ENCODE measurements at regions of chr7 and their contacts with region 1.

Region 1: DNA sequence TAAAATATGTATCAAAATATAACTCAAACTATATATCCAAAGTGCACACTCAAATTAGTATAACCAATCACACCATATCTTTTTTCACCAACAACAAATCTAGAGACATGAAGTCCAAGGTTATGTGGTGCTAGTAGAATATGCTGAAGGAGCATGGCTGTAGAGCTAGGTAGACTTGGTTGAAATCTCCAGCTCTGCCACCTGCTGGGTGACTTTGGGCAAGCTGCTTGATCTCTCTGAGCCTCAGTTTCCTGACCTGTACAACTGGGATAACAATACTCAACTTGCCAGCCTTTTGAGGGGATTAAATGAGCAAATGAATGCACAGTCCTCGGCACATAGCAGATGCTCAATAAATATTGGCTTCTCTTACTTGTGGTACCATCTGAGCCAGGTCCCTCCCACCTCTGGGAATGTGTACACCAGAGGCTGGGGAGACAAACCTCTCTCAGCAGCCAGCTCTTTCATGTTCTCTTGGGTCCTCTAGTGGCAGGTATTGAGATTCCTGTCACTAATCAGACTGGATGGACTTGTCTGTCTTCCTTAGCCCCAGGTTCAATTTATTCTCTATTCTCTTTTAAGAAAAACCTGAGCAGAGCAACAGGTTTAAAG is 94.2 kb upstream of the PDE1C start:
- DNase-seq: peak; percentile 81
- H3K4me3 ChIP-seq: no peak overlapping the region
- H3K27ac ChIP-seq: no peak overlapping the region
- H3K4me1 ChIP-seq: peaks cover 35% of the 10 kb centered on the region
- H3K27me3 ChIP-seq: no peaks in the 10 kb centered on the region
- CTCF ChIP-seq: peak; percentile 71 to 79

Region 2: GRCh38 chr7:31744294-31744874 is 420.1 kb before region 1 on chr7:
- CTCF ChIA-PET with region 1: interaction called, 7 read pairs
- dilution Hi-C with region 1: no loop called
- in situ Hi-C with region 1: loop called (anchors 10 kb)
- intact Hi-C with region 1: loop called (anchors 1 kb)
- DNase-seq: peak; percentile 64
- H3K4me3 ChIP-seq: no peak overlapping the region
- H3K27ac ChIP-seq: no peak overlapping the region
- H3K4me1 ChIP-seq: peaks cover 9% of the 10 kb centered on the region
- H3K27me3 ChIP-seq: no peaks in the 10 kb centered on the region
- CTCF ChIP-seq: peak; percentile 87 to 94

Region 3: DNA sequence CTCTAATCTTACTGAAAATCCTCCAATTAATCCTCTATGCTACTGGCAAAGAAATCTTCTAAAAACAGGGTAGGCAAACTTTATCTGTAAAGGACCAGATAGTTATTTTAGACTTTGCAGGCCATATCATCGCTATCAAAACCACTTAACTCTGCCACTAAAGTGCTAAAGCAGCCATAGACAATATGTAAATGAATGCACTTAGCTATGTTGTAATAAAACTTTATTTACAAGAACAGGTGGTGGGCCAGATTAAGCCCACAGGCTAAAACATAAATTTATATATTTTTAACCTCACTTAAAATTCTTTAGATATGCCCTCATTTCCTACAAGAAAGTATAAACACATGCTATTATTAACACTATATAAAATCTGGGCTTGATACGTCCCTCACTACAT is 337.7 kb before region 1 on chr7:
- CTCF ChIA-PET with region 1: no interaction called
- dilution Hi-C with region 1: no loop called
- in situ Hi-C with region 1: no loop called
- intact Hi-C with region 1: loop called (anchors 2 kb)
- DNase-seq: no peak
- H3K4me3 ChIP-seq: no peak overlapping the region
- H3K27ac ChIP-seq: no peak overlapping the region
- H3K4me1 ChIP-seq: no peaks in the 10 kb centered on the region
- H3K27me3 ChIP-seq: no peaks in the 10 kb centered on the region
- CTCF ChIP-seq: no peak

Region 4: DNA sequence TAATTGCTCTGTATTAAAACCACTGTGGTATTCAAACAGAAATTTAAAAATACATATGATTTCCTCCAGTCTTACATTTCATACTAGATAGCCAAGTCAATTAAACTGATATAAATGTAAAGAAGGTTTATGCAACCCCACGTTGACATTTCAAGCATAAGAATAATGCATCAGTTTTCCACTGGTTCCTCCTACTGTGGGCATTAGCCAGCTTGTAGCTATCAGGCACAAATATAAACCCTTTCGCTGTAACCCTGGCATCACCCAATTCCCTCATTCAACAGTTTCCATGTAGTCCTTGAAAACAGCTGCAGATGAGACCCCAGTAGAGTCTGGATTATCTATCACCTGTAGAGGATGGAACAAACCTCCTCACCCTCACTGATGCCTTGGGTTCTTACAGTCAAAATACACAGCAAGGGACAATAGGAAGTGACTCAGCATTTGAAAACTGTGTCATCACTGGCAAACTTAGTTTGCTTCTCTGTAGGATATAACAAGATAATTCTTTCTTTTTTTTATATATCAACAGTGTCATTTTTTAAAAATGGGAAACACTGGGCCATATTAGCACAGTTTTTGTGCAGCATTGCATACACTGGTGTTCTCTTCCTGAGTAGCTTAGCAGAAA is 207.2 kb before region 1 on chr7:
- CTCF ChIA-PET with region 1: interaction called, 23 read pairs
- dilution Hi-C with region 1: no loop called
- in situ Hi-C with region 1: no loop called
- intact Hi-C with region 1: no loop called
- DNase-seq: no peak
- H3K4me3 ChIP-seq: no peak overlapping the region
- H3K27ac ChIP-seq: peak overlapping the region; percentile 15
- H3K4me1 ChIP-seq: peaks cover 21% of the 10 kb centered on the region
- H3K27me3 ChIP-seq: no peaks in the 10 kb centered on the region
- CTCF ChIP-seq: no peak

Region 5: GRCh38 chr7:32070406-32071360 is 93.8 kb before region 1 on chr7 and contains the start of gene PDE1C:
- CTCF ChIA-PET with region 1: interaction called, 6 read pairs
- dilution Hi-C with region 1: loop called (anchors 10 kb)
- in situ Hi-C with region 1: loop called (anchors 10 kb)
- intact Hi-C with region 1: loop called (anchors 1 kb)
- DNase-seq: peak; percentile 42
- H3K4me3 ChIP-seq: peak within 1 kb of the TSS; percentile 69 to 90 (median 74)
- H3K27ac ChIP-seq: peak within 1 kb of the TSS; percentile 73
- H3K4me1 ChIP-seq: peaks cover 20% of the 10 kb centered on the region
- H3K27me3 ChIP-seq: no peaks in the 10 kb centered on the region
- CTCF ChIP-seq: no peak
- total RNA-seq, gene PDE1C: 35.8 to 109 TPM

Region 6: DNA sequence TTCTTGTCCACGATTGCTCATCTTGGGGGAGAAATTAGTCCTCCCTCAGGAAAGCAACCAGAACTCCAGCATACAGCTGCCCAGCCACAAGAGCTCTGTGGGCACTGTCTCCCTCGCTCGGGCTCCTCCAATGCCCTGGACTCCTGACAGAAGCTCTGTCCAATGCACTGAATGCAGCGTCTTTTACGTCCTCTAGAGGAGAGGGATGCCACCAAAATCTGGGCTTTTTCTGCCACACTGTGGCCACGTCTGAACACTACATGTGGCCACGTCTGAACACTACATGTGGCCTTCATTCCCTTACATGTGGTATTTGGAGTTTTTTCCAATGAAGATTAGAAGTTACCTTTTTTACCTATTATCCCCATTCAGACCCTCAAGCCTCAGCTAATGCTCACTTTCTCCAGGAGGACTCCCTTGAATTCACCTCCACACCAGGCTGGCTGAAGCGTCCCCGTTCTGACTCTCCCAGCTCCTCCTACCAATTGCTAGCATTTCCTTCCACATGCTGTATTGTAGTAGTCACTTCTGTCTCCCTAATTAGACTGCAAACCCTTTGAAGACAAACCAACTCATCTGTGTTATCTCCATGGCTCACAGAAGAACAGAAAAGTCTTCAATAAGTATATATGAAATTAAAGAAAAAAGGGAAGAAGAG is 40.0 kb after region 1 on chr7:
- CTCF ChIA-PET with region 1: interaction called, 7 read pairs
- dilution Hi-C with region 1: no loop called
- in situ Hi-C with region 1: no loop called
- intact Hi-C with region 1: loop called (anchors 1 kb)
- DNase-seq: peak; percentile 85
- H3K4me3 ChIP-seq: peak overlapping the region; percentile 30 to 40 (median 30)
- H3K27ac ChIP-seq: no peak overlapping the region
- H3K4me1 ChIP-seq: peaks cover 3% of the 10 kb centered on the region
- H3K27me3 ChIP-seq: no peaks in the 10 kb centered on the region
- CTCF ChIP-seq: peak; percentile 85 to 88

Region 7: GRCh38 chr7:32218154-32218467 is 53.7 kb after region 1 on chr7:
- CTCF ChIA-PET with region 1: no interaction called
- dilution Hi-C with region 1: no loop called
- in situ Hi-C with region 1: no loop called
- intact Hi-C with region 1: no loop called
- DNase-seq: peak; percentile 13
- H3K4me3 ChIP-seq: no peak overlapping the region
- H3K27ac ChIP-seq: no peak overlapping the region
- H3K4me1 ChIP-seq: peaks cover 10% of the 10 kb centered on the region
- H3K27me3 ChIP-seq: no peaks in the 10 kb centered on the region
- CTCF ChIP-seq: no peak

Region 8: DNA sequence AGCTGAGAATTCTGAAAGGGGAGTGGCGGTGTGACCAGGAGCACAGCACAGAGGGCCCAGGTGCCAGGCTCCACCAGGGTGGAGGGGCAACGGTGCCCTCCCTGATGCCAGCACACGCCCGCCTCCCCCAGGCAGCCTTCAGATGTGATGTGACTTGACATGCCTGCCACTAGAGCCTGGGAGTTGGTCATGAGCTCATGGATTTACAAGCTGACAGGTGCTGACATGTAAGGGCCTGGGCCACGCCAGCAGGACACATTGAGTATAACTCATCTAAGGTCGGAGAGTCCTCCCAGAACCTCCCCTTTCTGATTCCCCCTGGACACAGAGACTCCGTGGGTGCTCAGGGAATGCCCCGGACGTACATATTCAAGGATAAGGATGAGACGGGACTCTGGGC is 251.5 kb after region 1 on chr7:
- CTCF ChIA-PET with region 1: no interaction called
- dilution Hi-C with region 1: no loop called
- in situ Hi-C with region 1: no loop called
- intact Hi-C with region 1: no loop called
- DNase-seq: peak; percentile 64
- H3K4me3 ChIP-seq: no peak overlapping the region
- H3K27ac ChIP-seq: no peak overlapping the region
- H3K4me1 ChIP-seq: peaks cover 15% of the 10 kb centered on the region
- H3K27me3 ChIP-seq: no peaks in the 10 kb centered on the region
- CTCF ChIP-seq: peak; percentile 23 to 56

Measured in mammary epithelial cell (primary cell).